ENCODE measurements at regions of chr10 and their contacts with region 1.

Region 1: DNA sequence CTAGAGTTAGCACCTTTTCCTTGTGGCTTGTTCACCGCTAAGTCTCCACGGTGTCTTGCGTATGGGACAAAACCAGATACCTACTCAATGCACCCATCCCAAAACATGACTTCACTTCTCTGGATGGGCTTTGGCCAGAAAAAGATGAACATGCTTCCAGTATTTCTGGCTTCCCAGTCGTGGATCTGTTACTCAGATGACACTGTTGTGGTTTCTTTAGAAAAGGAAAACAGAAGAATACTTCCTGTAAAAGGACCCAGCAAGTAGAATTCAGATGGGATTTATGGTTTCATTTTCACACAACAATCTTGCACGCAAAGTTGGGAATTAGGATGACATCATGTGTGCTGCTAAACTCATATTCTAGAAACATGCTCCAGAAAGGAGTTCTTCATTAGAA is 216.7 kb downstream of the ADAM12 start:
- DNase-seq: no peak
- H3K4me3 ChIP-seq: no peak overlapping the region
- H3K27ac ChIP-seq: peak overlapping the region in 1 of 2 donors; percentile 51
- H3K4me1 ChIP-seq: peaks cover 15% of the 10 kb centered on the region
- H3K27me3 ChIP-seq: no peaks in the 10 kb centered on the region
- CTCF ChIP-seq: no peak
- EP300 ChIP-seq: no peak
- POLR2A ChIP-seq: no peak

Region 2: DNA sequence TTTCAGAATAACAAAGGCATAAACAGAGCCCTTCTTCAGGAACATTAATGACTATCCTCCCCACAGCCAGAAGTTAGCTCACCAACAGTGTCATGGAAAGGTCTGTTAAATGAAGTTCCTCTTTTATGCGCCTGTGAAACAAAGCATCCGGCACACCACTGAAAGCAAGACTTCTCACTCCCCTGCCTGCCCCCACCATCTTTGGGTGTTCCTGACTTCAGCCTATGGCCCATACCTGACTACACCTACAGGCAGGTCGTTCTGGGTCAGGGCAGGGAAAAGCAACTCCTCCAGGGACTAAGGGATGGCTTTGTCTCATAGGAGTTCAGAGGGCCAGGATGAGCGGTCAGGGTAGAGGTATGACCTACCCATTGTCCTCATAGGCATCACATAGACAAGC is 69.8 kb before region 1 on chr10:
- intact Hi-C with region 1: loop called in 1 of 4 experiments (anchors 10 kb)
- DNase-seq: no peak
- H3K4me3 ChIP-seq: no peak overlapping the region
- H3K27ac ChIP-seq: no peak overlapping the region
- H3K4me1 ChIP-seq: peaks cover 9% of the 10 kb centered on the region
- H3K27me3 ChIP-seq: no peaks in the 10 kb centered on the region
- CTCF ChIP-seq: no peak
- EP300 ChIP-seq: no peak
- POLR2A ChIP-seq: no peak

Region 3: GRCh38 chr10:126158503-126158892 is 13.1 kb before region 1 on chr10:
- intact Hi-C with region 1: loop called in 1 of 4 experiments (anchors 1 kb)
- DNase-seq: no peak
- H3K4me3 ChIP-seq: no peak overlapping the region
- H3K27ac ChIP-seq: no peak overlapping the region
- H3K4me1 ChIP-seq: peaks cover 9% of the 10 kb centered on the region
- H3K27me3 ChIP-seq: no peaks in the 10 kb centered on the region
- CTCF ChIP-seq: no peak
- EP300 ChIP-seq: no peak
- POLR2A ChIP-seq: no peak

Measured in ovary (tissue), 10 donors.